ENCODE measurements at regions of chr11 and their contacts with region 1.

Region 1: GRCh38 chr11:121292495-121293287 is at the start of gene SC5D:
- DNase-seq: peak; percentile 99
- H3K4me3 Mint-ChIP-seq: peak within 1 kb of the TSS; percentile 91
- H3K27ac Mint-ChIP-seq: peak within 1 kb of the TSS; percentile 92
- H3K4me1 Mint-ChIP-seq: peaks cover 22% of the 10 kb centered on the region
- H3K27me3 Mint-ChIP-seq: peaks cover 9% of the 10 kb centered on the region
- total RNA-seq, gene SC5D: 22.9 and 25.4 TPM in 2 replicates

Region 2: GRCh38 chr11:121236115-121237001 is 56.3 kb before region 1 on chr11:
- intact Hi-C with region 1: loop called (anchors 5 kb)
- DNase-seq: peak; percentile 53
- H3K4me3 Mint-ChIP-seq: peak overlapping the region; percentile 1
- H3K27ac Mint-ChIP-seq: peak overlapping the region; percentile 59
- H3K4me1 Mint-ChIP-seq: peaks cover 21% of the 10 kb centered on the region
- H3K27me3 Mint-ChIP-seq: peaks cover 34% of the 10 kb centered on the region

Region 3: GRCh38 chr11:121311373-121311772 is 18.7 kb after region 1 on chr11:
- intact Hi-C with region 1: loop called (anchors 1 kb)
- DNase-seq: no peak
- H3K4me3 Mint-ChIP-seq: no peak overlapping the region
- H3K27ac Mint-ChIP-seq: no peak overlapping the region
- H3K4me1 Mint-ChIP-seq: peaks cover 14% of the 10 kb centered on the region
- H3K27me3 Mint-ChIP-seq: no peaks in the 10 kb centered on the region

Region 4: GRCh38 chr11:121328967-121329679 is 36.4 kb after region 1 on chr11:
- intact Hi-C with region 1: loop called (anchors 2 kb)
- DNase-seq: peak; percentile 70
- H3K4me3 Mint-ChIP-seq: no peak overlapping the region
- H3K27ac Mint-ChIP-seq: no peak overlapping the region
- H3K4me1 Mint-ChIP-seq: peaks cover 4% of the 10 kb centered on the region
- H3K27me3 Mint-ChIP-seq: peaks cover 7% of the 10 kb centered on the region

Measured in activated CD4-positive, alpha-beta T cell treated with anti-CD3 and anti-CD28 coated beads, Interleukin-2, amount 10 ng/mL, durations not matched to agents 24 days and 14 days (primary cell).